A673 (cell line): ENCODE measurements at regions of chr19 and their contacts with region 1.

Region 1: GRCh38 chr19:32123355-32123940 is 222.0 kb upstream of the ZNF507 start:
- DNase-seq: no peak
- H3K4me3 ChIP-seq: no peak overlapping the region
- H3K27ac ChIP-seq: no peak overlapping the region
- H3K4me1 ChIP-seq: no peaks in the 10 kb centered on the region
- H3K27me3 ChIP-seq: no peaks in the 10 kb centered on the region
- CTCF ChIP-seq: no peak

Region 2: DNA sequence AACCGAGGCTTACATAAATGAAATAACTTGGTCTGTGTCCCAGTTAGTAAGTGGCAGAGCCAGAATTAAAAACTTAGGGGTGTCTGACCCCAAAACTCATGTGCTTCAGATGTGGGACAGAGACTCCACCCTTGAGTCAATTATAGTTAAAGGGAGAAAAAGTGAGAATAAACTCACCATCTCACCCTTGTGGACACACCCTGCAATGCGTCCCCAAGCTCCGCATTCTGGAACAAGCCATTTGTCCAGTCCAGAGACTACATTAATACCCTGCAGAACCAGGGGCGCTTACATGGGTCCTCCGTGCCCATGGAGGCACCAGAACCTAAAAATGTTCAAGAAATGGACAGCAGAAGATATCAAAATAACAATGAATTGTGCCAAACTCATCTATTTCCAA is 15.0 kb after region 1 on chr19:
- CTCF ChIA-PET with region 1: no interaction called
- POLR2A ChIA-PET with region 1: interaction called, 14 read pairs
- intact Hi-C with region 1: no loop called
- DNase-seq: peak; percentile 8
- H3K4me3 ChIP-seq: no peak overlapping the region
- H3K27ac ChIP-seq: no peak overlapping the region
- H3K4me1 ChIP-seq: no peaks in the 10 kb centered on the region
- H3K27me3 ChIP-seq: no peaks in the 10 kb centered on the region
- CTCF ChIP-seq: peak; percentile 45